Activated B cell treated with CpG ODN at 0.5 μM for 24 hours (primary cell): ENCODE measurements at regions of chr14 and their contacts with region 1.

Region 1: GRCh38 chr14:91177073-91178034 is 63.5 kb downstream of the DGLUCY start:
- DNase-seq: peak; percentile 29
- ATAC-seq: peak; percentile 80
- H3K4me3 Mint-ChIP-seq: no peak overlapping the region
- H3K27ac Mint-ChIP-seq: no peak overlapping the region
- H3K4me1 Mint-ChIP-seq: peaks cover 5% of the 10 kb centered on the region
- H3K27me3 Mint-ChIP-seq: no peaks in the 10 kb centered on the region
- CTCF ChIP-seq: peak; percentile 55

Region 2: GRCh38 chr14:90903101-90903500 is 274.3 kb before region 1 on chr14:
- CTCF ChIA-PET with region 1: interaction called, 288 read pairs
- POLR2A ChIA-PET with region 1: interaction called, 21 read pairs
- intact Hi-C with region 1: loop called (anchors 1 kb)
- DNase-seq: no peak
- ATAC-seq: peak; percentile 66
- H3K4me3 Mint-ChIP-seq: no peak overlapping the region
- H3K27ac Mint-ChIP-seq: no peak overlapping the region
- H3K4me1 Mint-ChIP-seq: peaks cover 14% of the 10 kb centered on the region
- H3K27me3 Mint-ChIP-seq: no peaks in the 10 kb centered on the region
- CTCF ChIP-seq: peak; percentile 89

Region 3: GRCh38 chr14:90985601-90986242 is 191.6 kb before region 1 on chr14:
- CTCF ChIA-PET with region 1: interaction called, 97 read pairs
- POLR2A ChIA-PET with region 1: interaction called, 8 read pairs
- intact Hi-C with region 1: loop called (anchors 1 kb)
- DNase-seq: no peak
- ATAC-seq: peak; percentile 57
- H3K4me3 Mint-ChIP-seq: no peak overlapping the region
- H3K27ac Mint-ChIP-seq: no peak overlapping the region
- H3K4me1 Mint-ChIP-seq: peaks cover 19% of the 10 kb centered on the region
- H3K27me3 Mint-ChIP-seq: no peaks in the 10 kb centered on the region
- CTCF ChIP-seq: no peak

Region 4: DNA sequence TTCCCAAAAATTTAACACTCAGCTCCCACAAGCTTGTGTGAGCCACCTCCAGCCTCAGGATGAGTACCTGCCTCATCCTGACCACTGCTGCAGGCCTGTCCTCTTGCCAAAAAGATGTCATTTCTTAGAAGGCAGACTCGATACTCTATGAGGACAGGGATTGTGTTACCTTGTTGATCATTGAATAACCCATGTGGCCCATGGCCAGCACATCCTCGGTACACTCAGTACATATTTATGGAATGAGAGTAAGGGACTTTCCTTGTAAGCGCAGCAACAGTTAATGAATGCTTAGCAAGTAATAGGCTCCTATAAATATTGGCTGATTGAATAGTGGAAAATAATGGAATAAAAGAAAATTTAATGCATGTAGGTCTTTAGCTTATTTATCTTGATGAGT is 78.8 kb before region 1 on chr14:
- CTCF ChIA-PET with region 1: no interaction called
- POLR2A ChIA-PET with region 1: no interaction called
- intact Hi-C with region 1: no loop called
- DNase-seq: no peak
- ATAC-seq: no peak
- H3K4me3 Mint-ChIP-seq: no peak overlapping the region
- H3K27ac Mint-ChIP-seq: no peak overlapping the region
- H3K4me1 Mint-ChIP-seq: no peaks in the 10 kb centered on the region
- H3K27me3 Mint-ChIP-seq: no peaks in the 10 kb centered on the region
- CTCF ChIP-seq: no peak

Region 5: GRCh38 chr14:91228112-91229004 is 51.0 kb after region 1 on chr14:
- CTCF ChIA-PET with region 1: interaction called, 4 read pairs
- POLR2A ChIA-PET with region 1: no interaction called
- intact Hi-C with region 1: loop called (anchors 1 kb)
- DNase-seq: peak; percentile 53
- ATAC-seq: peak; percentile 88
- H3K4me3 Mint-ChIP-seq: peak overlapping the region; percentile 63
- H3K27ac Mint-ChIP-seq: peak overlapping the region; percentile 89
- H3K4me1 Mint-ChIP-seq: peaks cover 71% of the 10 kb centered on the region
- H3K27me3 Mint-ChIP-seq: no peaks in the 10 kb centered on the region
- CTCF ChIP-seq: no peak

Region 6: DNA sequence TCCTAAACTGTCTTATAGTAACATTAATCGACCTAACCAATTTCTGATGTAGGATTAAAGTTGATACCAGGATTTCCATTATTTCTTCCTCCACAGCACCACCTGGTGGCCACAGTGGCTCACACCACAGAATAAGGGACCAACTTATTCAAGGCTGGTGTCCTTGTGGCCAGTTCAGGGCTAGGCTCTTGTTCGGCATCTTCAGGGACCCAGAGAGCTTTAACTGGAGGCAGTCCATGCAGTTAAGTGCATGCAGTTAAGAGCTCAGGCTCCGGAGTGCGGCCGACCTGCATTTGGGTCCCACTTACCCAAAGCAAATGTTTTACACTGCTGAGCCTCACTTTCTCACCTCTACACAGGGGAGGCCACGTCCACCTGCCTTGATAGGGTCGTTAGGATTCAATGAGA is 109.2 kb after region 1 on chr14:
- CTCF ChIA-PET with region 1: interaction called, 265 read pairs
- POLR2A ChIA-PET with region 1: interaction called, 10 read pairs
- intact Hi-C with region 1: loop called (anchors 1 kb)
- DNase-seq: peak; percentile 64
- ATAC-seq: peak; percentile 88
- H3K4me3 Mint-ChIP-seq: no peak overlapping the region
- H3K27ac Mint-ChIP-seq: no peak overlapping the region
- H3K4me1 Mint-ChIP-seq: peaks cover 24% of the 10 kb centered on the region
- H3K27me3 Mint-ChIP-seq: no peaks in the 10 kb centered on the region
- CTCF ChIP-seq: peak; percentile 90

Region 7: GRCh38 chr14:91311284-91311662 is 133.9 kb after region 1 on chr14:
- CTCF ChIA-PET with region 1: no interaction called
- POLR2A ChIA-PET with region 1: no interaction called
- intact Hi-C with region 1: no loop called
- DNase-seq: no peak
- ATAC-seq: peak; percentile 16
- H3K4me3 Mint-ChIP-seq: no peak overlapping the region
- H3K27ac Mint-ChIP-seq: peak overlapping the region; percentile 82
- H3K4me1 Mint-ChIP-seq: peaks cover 49% of the 10 kb centered on the region
- H3K27me3 Mint-ChIP-seq: no peaks in the 10 kb centered on the region
- CTCF ChIP-seq: no peak

Region 8: GRCh38 chr14:92236243-92236900 is 1059.0 kb after region 1 on chr14:
- CTCF ChIA-PET with region 1: no interaction called
- POLR2A ChIA-PET with region 1: no interaction called
- intact Hi-C with region 1: no loop called
- DNase-seq: no peak
- ATAC-seq: no peak
- H3K4me3 Mint-ChIP-seq: no peak overlapping the region
- H3K27ac Mint-ChIP-seq: no peak overlapping the region
- H3K4me1 Mint-ChIP-seq: no peaks in the 10 kb centered on the region
- H3K27me3 Mint-ChIP-seq: peaks cover 39% of the 10 kb centered on the region
- CTCF ChIP-seq: no peak